Breast epithelium (tissue), 4 donors: ENCODE measurements at regions of chr1 and their contacts with region 1.

Region 1: GRCh38 chr1:10731041-10731440 is 65.4 kb downstream of the CASZ1 start:
- DNase-seq: no peak
- H3K4me3 ChIP-seq: no peak overlapping the region
- H3K27ac ChIP-seq: peak overlapping the region in 1 of 2 donors; percentile 14
- H3K4me1 ChIP-seq: peaks cover 9 to 33% of the 10 kb centered on the region in 2 donors
- H3K27me3 ChIP-seq: peaks cover 0 to 3% of the 10 kb centered on the region in 2 donors
- CTCF ChIP-seq: no peak
- POLR2A ChIP-seq: no peak

Region 2: DNA sequence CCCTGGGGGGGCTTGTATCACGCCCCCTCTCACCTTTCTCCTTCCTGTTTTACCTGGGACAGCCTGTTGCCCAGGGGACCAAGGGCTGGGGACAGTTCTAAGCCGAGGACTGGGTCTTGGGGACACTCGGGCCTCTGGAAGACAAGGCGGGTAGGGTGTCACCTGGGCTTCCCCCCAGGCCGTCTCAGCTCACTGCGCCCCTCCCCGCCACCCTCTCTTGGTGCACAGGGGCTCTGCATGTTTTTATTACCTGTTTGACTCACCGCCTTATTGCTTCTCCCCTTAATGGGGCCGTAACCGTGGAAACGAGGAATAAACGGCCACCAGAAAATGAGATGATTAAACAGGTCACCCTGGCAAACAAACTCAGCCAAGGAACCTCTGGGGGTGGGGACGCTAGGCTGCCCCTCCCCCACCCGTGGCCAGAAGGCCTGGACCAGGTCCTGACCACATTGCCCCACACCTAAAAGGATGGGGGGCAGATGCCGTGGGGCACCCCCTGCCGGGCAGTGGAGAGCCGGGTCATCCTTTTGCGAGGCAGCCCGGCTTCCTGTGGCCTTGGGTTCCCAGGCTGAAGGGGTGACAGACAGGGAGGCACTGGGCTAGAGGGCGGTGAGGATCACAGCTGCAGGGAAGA is 44.5 kb before region 1 on chr1:
- intact Hi-C with region 1: loop called (anchors 1 kb)
- DNase-seq: no peak
- H3K4me3 ChIP-seq: no peak overlapping the region
- H3K27ac ChIP-seq: peak overlapping the region; percentile 73
- H3K4me1 ChIP-seq: peaks cover 4 to 26% of the 10 kb centered on the region in 2 donors
- H3K27me3 ChIP-seq: no peaks in the 10 kb centered on the region
- CTCF ChIP-seq: no peak
- POLR2A ChIP-seq: no peak

Region 3: DNA sequence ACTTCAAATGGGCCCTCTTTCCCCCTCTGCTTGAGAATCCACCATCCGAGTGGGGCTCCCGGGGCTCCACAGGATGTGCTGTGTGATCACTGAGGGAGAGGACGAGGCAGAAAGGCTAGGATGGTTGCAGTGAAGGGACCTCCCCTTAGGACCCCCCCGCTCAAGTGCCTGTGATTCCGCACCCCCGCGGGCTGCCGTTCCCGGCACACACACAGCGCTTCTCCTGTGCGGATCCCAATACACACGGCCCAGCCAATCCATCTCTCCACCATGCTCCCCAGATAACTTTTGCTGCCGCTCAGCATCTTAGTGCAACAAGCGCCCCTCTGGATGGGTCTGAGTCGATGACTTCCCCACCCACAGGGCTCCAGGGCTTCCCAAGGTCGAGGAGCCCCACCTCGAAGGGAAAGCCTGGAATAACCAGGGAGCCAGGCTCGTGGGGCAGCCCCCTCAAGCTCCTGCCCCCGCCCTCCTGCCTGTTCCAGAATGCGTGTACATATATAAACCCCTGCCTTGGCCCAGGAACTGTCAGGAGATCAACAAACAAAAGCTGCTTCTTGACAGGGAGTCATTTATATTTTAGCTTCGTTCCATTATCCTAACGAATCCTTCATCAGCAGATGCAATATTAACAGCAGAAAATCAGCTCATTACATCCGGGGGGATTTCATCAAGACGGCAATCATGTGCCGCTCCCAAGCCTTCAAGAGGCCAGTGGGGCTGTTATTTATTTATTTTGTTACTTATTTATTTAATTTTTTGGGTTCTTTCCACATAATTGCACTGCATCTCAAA is 18.3 kb before region 1 on chr1:
- intact Hi-C with region 1: loop called (anchors 1 kb)
- DNase-seq: no peak
- H3K4me3 ChIP-seq: no peak overlapping the region
- H3K27ac ChIP-seq: no peak overlapping the region
- H3K4me1 ChIP-seq: no peaks in the 10 kb centered on the region
- H3K27me3 ChIP-seq: peaks cover 0 to 10% of the 10 kb centered on the region in 2 donors
- CTCF ChIP-seq: no peak
- POLR2A ChIP-seq: no peak

Region 4: GRCh38 chr1:11352816-11353799 is 622.1 kb after region 1 on chr1:
- intact Hi-C with region 1: loop called (anchors 5 kb)
- DNase-seq: no peak
- H3K4me3 ChIP-seq: no peak overlapping the region
- H3K27ac ChIP-seq: no peak overlapping the region
- H3K4me1 ChIP-seq: no peaks in the 10 kb centered on the region
- H3K27me3 ChIP-seq: peaks cover 0 to 24% of the 10 kb centered on the region in 2 donors
- CTCF ChIP-seq: no peak
- POLR2A ChIP-seq: no peak